Activated naive CD4-positive, alpha-beta T cell treated with anti-CD3 and anti-CD28 coated beads for 36 hours (primary cell): ENCODE measurements at regions of chr6 and their contacts with region 1.

Region 1: DNA sequence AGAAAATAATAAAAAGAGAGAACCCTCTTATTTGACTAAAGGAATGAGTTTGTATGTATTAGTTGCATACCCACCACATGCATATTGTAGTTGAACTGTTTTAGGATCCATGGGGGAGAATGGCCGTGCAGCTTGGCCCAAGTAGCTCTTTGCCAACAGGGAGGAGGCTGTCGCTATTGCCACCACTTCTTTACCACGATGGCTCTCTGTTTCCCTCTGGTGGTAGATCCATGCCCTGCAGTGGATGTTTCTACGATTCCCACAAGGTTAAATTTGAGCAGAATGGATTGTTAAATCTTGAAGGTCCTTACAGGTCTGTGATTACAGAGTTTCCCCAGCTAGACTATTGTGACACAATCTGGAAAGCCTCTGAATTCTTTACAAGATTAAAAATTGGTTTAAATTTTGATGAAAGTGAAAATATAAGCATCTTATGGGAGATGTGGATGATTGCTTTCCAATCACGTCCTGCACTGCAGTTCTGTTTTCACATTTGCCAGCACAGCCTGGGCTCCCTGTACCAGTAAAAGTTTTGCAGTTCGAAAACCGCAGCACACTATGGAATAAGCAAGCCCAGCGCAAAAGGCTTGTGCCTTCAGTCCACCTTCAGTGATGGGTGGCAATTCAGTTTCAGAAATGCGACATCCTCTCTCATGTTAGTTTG is 34.4 kb upstream of the FNDC1 start:
- DNase-seq: peak; percentile 89
- H3K4me3 Mint-ChIP-seq: no peak overlapping the region
- H3K27ac Mint-ChIP-seq: no peak overlapping the region
- H3K4me1 Mint-ChIP-seq: no peaks in the 10 kb centered on the region
- H3K27me3 Mint-ChIP-seq: peaks cover 5% of the 10 kb centered on the region

Region 2: GRCh38 chr6:158213925-158214674 is 920.7 kb before region 1 on chr6:
- CTCF ChIA-PET with region 1: no interaction called
- intact Hi-C with region 1: loop called (anchors 10 kb)
- DNase-seq: peak; percentile 68
- H3K4me3 Mint-ChIP-seq: no peak overlapping the region
- H3K27ac Mint-ChIP-seq: no peak overlapping the region
- H3K4me1 Mint-ChIP-seq: peaks cover 8% of the 10 kb centered on the region
- H3K27me3 Mint-ChIP-seq: no peaks in the 10 kb centered on the region

Region 3: GRCh38 chr6:158999666-159000403 is 135.0 kb before region 1 on chr6 and contains the start of gene RSPH3:
- CTCF ChIA-PET with region 1: interaction called, 215 read pairs
- intact Hi-C with region 1: loop called (anchors 2 kb)
- DNase-seq: peak; percentile 94
- H3K4me3 Mint-ChIP-seq: peak within 1 kb of the TSS; percentile 98
- H3K27ac Mint-ChIP-seq: peak within 1 kb of the TSS; percentile 82
- H3K4me1 Mint-ChIP-seq: peaks cover 45% of the 10 kb centered on the region
- H3K27me3 Mint-ChIP-seq: no peaks in the 10 kb centered on the region
- total RNA-seq, gene RSPH3: 3.0 to 3.2 TPM

Region 4: DNA sequence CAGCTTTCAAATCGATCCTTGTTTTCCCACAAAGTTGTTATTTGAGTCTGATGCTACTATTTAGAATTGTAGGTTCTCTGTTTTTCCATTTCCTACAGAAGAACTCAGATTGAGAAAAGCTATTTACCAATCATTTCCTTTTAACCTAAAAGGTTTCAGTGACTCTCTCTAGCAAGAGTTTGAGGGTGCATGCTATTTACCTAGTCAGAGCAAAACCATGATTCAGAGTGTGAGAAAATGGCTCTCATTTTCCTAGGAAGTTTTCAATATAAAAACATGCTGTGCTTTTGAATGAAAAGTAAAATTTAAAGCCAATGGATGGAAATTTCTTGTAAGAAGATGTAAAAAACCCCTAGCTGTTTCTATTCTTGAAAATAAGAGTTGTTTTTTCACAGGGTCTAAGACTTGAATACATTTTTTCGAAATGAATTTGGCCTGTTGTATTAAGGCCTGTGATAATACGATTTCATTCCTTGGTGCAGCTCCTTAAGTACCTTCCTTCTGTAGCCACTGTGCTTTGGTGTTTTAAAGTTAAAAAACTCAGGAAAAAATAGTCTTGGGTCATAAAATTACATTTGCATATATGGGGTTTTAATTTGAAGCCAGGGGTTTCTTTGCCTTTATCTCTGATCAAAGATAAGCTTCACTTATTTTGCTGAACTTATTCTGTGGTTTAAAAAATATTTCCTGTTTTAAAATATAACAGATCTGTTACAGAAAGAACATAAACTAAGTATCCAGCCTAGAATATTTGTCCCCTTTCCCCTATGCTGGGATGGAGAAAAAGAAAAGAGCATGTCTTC is 116.9 kb before region 1 on chr6:
- CTCF ChIA-PET with region 1: interaction called, 215 read pairs
- intact Hi-C with region 1: no loop called
- DNase-seq: no peak
- H3K4me3 Mint-ChIP-seq: no peak overlapping the region
- H3K27ac Mint-ChIP-seq: peak overlapping the region; percentile 68
- H3K4me1 Mint-ChIP-seq: peaks cover 47% of the 10 kb centered on the region
- H3K27me3 Mint-ChIP-seq: no peaks in the 10 kb centered on the region

Region 5: DNA sequence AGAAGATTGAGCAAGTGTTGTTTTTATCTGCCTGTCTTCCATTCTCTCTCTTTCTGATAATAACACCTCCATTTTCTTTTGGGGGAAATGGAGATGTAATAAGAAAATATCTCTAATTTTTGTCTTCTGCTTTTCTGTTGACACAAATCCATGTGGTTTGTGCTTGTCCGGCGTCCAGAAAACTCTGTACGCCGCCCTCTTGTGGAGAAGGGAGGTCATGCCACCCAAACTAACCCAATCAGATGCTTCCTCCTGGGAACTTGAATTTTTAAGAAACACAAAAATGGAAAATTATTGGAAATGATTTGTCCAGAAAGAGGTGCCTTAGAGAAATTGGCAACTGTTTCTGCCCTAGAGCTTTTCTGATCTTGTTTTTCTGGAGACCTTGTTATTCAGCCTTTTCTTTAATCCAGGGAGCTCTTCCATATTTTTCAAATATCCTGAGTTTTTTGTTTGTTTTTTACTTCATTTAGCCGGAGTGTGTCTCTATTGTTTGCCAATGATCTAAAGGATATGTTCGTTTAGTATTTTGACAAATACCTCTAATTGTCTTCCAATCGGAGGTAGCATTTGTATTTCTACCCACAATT is 16.5 kb after region 1 on chr6:
- CTCF ChIA-PET with region 1: interaction called, 25 read pairs
- intact Hi-C with region 1: no loop called
- DNase-seq: peak; percentile 69
- H3K4me3 Mint-ChIP-seq: no peak overlapping the region
- H3K27ac Mint-ChIP-seq: no peak overlapping the region
- H3K4me1 Mint-ChIP-seq: peaks cover 2% of the 10 kb centered on the region
- H3K27me3 Mint-ChIP-seq: peaks cover 2% of the 10 kb centered on the region